CD4-positive, alpha-beta T cell (primary cell): ENCODE measurements at regions of chr3 and their contacts with region 1.

Region 1: DNA sequence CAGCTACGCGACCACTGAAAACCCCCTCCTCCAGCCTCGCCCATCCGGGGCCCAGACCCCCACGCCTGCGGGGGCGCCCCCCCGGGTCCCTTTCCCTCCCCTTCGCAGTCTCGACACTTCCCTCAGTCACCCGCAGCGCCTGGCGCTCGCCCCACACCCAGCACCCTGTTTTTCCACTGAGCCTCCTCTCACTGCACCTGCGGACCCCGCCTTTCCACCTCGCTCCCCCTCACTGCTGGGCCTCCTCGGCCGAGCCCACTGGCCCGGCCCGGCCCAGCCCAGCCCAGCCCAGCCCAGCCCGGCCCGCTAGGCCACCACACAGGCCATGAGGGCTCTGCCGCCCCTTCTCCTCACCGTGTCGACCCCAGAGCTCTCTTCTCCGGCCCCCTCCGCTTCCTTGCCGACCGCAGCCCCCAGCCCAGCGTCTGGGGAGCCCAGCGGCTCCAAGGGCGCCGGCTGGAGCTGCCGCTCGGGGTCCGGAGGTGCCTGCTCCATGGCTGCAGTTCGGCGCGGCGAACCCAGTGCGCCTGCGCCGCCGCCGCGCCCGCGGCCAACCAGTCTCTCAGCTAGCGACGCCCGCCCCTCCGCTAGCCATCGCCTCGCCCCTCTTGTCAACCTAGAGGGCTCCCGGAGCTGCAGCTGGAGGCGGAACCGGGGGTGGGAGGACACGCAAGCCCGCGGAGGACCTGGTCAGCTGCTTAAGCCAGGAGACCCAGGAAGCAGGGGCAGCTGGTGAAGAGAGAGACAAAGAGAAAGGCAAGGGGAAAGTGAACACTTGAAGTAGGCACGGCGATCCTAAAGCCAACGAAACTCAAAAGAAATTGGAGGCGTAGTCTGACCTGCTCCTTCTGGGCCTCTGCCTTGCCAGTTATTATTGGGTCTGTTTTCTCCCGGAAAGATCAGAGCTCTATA is at the start of gene SNX4:
- DNase-seq: peak; percentile 74 to 93 (median 84)
- ATAC-seq: peak; percentile 97
- H3K4me3 ChIP-seq: peak within 1 kb of the TSS; percentile 77
- H3K4me3 Mint-ChIP-seq: peak within 1 kb of the TSS; percentile 98
- H3K27ac ChIP-seq: peak within 1 kb of the TSS; percentile 23 to 51
- H3K27ac Mint-ChIP-seq: peak within 1 kb of the TSS; percentile 85
- H3K4me1 ChIP-seq: peaks cover 22% of the 10 kb centered on the region
- H3K4me1 Mint-ChIP-seq: peaks cover 39% of the 10 kb centered on the region
- H3K27me3 ChIP-seq: no peaks in the 10 kb centered on the region
- H3K27me3 Mint-ChIP-seq: no peaks in the 10 kb centered on the region
- CTCF ChIP-seq: no peak
- total RNA-seq, gene SNX4: 23.4 to 24.6 TPM

Region 2: DNA sequence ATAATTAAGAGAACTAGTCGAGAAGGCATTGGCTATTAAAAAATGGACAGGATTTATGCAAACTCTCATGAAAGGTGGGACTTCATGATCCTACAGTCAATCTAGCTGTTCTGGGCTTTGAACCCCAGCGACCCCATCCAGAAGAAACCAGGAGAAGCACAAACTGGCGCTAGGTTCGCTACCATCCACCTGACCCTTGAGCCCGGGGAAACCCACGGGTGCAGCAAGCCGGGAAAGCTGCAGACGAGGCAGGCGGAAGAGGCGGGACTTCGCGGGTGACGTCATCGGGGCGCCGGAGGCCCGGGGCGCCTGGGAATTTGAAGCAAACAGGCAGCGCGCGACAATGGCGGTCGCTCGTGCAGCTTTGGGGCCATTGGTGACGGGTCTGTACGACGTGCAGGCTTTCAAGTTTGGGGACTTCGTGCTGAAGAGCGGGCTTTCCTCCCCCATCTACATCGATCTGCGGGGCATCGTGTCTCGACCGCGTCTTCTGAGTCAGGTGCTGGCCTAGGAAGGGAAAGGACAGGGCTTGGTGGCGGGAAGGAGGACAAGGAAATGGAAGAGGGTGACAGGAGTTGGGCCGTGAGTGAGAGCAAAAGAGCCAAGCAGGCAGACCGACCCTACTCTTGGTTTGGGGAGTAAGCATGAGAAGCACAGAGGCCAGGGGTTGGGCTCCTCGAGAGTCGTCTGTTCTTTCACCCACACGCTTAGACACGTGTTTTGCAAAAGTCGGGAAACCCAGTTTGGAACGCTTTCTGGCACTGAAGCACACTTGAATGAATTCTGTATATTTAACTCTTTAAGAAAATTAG is 789.6 kb before region 1 on chr3 and contains the start of gene UMPS:
- CTCF ChIA-PET with region 1: no interaction called
- POLR2A ChIA-PET with region 1: no interaction called
- intact Hi-C with region 1: loop called in 1 of 2 experiments (anchors 2 kb)
- DNase-seq: peak; percentile 83 to 95 (median 91)
- ATAC-seq: peak; percentile 97
- H3K4me3 ChIP-seq: peak within 1 kb of the TSS; percentile 78
- H3K4me3 Mint-ChIP-seq: peak within 1 kb of the TSS; percentile 98
- H3K27ac ChIP-seq: peak within 1 kb of the TSS; percentile 54 to 76
- H3K27ac Mint-ChIP-seq: peak within 1 kb of the TSS; percentile 94
- H3K4me1 ChIP-seq: peaks cover 21% of the 10 kb centered on the region
- H3K4me1 Mint-ChIP-seq: peaks cover 44% of the 10 kb centered on the region
- H3K27me3 ChIP-seq: peaks cover 5 to 11% of the 10 kb centered on the region in 2 experiments
- H3K27me3 Mint-ChIP-seq: peaks cover 17% of the 10 kb centered on the region
- CTCF ChIP-seq: no peak
- total RNA-seq, gene UMPS: 19.5 to 19.7 TPM

Region 3: DNA sequence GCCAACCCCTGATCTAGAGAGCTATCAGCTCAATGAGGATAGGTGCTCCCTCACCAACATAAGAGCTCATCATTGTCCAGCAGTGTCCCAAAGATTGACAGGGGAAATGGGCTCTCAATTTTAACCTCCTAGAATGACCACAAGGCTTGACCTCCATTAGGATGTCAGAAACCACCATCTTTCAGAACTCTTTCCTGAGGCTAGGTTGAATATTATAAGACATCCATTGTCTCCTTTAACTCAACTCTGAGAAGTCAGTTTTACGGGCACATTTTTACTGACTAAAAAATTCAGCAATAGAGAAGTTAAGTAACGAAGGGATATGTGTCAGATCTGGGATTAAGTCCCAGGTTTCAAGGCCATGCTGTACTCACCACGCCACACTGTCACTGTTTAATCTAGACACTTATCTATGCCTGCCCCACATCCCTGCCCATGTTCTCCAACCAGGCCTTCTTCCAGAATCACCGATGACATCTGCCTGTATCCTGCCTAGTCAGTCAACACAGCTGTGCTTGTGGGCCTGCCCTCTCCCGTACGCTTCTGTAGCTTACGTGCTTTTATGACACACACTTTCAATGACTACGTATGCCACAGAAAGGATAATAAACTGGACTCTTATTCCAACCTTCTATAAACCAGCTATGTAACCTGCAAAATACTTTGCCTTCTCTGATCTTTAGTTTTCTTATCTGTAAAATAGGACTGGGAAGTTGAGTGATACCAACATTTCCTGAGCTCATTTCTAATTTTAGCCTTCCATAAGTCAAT is 568.2 kb before region 1 on chr3:
- CTCF ChIA-PET with region 1: no interaction called
- POLR2A ChIA-PET with region 1: no interaction called
- intact Hi-C with region 1: no loop called
- DNase-seq: no peak
- ATAC-seq: no peak
- H3K4me3 ChIP-seq: no peak overlapping the region
- H3K4me3 Mint-ChIP-seq: no peak overlapping the region
- H3K27ac ChIP-seq: no peak overlapping the region
- H3K27ac Mint-ChIP-seq: no peak overlapping the region
- H3K4me1 ChIP-seq: no peaks in the 10 kb centered on the region
- H3K4me1 Mint-ChIP-seq: no peaks in the 10 kb centered on the region
- H3K27me3 ChIP-seq: no peaks in the 10 kb centered on the region
- H3K27me3 Mint-ChIP-seq: no peaks in the 10 kb centered on the region
- CTCF ChIP-seq: no peak

Region 4: GRCh38 chr3:125556314-125556713 is 36.4 kb after region 1 on chr3:
- CTCF ChIA-PET with region 1: no interaction called
- POLR2A ChIA-PET with region 1: no interaction called
- intact Hi-C with region 1: no loop called
- DNase-seq: no peak
- ATAC-seq: no peak
- H3K4me3 ChIP-seq: no peak overlapping the region
- H3K4me3 Mint-ChIP-seq: no peak overlapping the region
- H3K27ac ChIP-seq: no peak overlapping the region
- H3K27ac Mint-ChIP-seq: no peak overlapping the region
- H3K4me1 ChIP-seq: no peaks in the 10 kb centered on the region
- H3K4me1 Mint-ChIP-seq: no peaks in the 10 kb centered on the region
- H3K27me3 ChIP-seq: no peaks in the 10 kb centered on the region
- H3K27me3 Mint-ChIP-seq: no peaks in the 10 kb centered on the region
- CTCF ChIP-seq: no peak

Region 5: DNA sequence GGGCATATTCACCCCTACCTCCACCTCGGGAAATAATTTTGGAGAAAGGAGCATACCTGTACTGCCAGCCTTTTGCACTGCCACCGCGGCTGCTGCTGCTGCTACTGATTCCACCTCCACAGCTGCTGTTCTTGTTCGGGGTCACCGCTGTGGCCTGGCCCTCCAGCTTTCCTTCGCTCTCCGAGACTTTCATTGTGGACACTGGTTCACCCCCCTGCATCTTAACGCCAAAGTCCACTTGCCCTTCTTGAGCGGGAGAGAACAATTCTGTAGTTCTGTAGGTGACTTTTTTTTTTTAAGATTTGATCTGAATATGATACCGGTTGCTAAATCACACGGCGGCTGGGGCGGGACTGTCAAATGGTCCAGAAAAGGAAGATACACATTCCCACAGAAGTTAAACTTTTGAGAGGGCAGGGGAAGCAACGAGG is 74.7 kb after region 1 on chr3:
- CTCF ChIA-PET with region 1: no interaction called
- POLR2A ChIA-PET with region 1: interaction called, 6 read pairs
- intact Hi-C with region 1: loop called in 1 of 2 experiments (anchors 2 kb)
- DNase-seq: no peak
- ATAC-seq: no peak
- H3K4me3 ChIP-seq: peak overlapping the region; percentile 92
- H3K4me3 Mint-ChIP-seq: peak overlapping the region; percentile 97
- H3K27ac ChIP-seq: peak overlapping the region; percentile 70 to 80
- H3K27ac Mint-ChIP-seq: peak overlapping the region; percentile 84
- H3K4me1 ChIP-seq: peaks cover 45% of the 10 kb centered on the region
- H3K4me1 Mint-ChIP-seq: peaks cover 46% of the 10 kb centered on the region
- H3K27me3 ChIP-seq: no peaks in the 10 kb centered on the region
- H3K27me3 Mint-ChIP-seq: no peaks in the 10 kb centered on the region
- CTCF ChIP-seq: no peak